Dorsolateral prefrontal cortex (tissue), 120 donors: ENCODE measurements at regions of chr5 and their contacts with region 1.

Region 1: DNA sequence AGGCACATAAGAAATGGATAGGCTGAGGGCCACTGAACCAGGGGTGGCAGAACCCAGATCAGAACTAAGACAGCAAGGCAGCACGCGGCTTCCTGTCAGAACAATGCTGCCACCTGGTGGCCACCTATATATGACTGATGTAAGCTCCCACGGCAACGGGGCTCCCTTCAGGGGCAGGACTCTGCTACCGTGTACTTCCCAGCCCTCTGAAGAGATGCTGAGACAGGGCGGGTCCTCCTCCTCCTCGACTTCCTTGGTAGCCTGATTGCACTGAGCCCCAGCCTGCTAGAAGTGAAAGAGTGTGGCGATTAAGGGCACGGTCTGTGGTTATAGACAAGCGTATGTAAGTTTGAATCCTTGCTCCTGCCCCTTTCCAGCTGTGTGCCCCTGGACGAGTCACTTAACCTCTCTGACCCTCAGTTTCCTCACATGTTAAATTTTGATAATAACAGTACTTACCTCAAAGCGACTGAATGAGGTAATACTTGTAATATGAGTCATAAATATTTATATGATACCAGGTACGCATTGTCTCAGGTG is 13.3 kb downstream of the RPS14 start:
- DNase-seq: peak; percentile 86 to 98 (median 90)
- H3K4me3 ChIP-seq: peak overlapping the region in 10 of 59 donors; percentile 7 to 40 (median 21)
- H3K27ac ChIP-seq: peak overlapping the region in 27 of 59 donors; percentile 5 to 70 (median 46)
- H3K27me3 ChIP-seq: no peaks in the 10 kb centered on the region
- CTCF ChIP-seq: peak; percentile 84 to 99 (median 95)

Region 2: GRCh38 chr5:150272526-150272925 is 163.7 kb before region 1 on chr5:
- intact Hi-C with region 1: loop called in 1 of 2 experiments (anchors 5 kb)
- DNase-seq: peak in 2 of 10 donors; percentile 60
- H3K4me3 ChIP-seq: no peak overlapping the region
- H3K27ac ChIP-seq: peak overlapping the region in 30 of 59 donors; percentile 3 to 85 (median 50)
- H3K27me3 ChIP-seq: no peaks in the 10 kb centered on the region
- CTCF ChIP-seq: peak in 54 of 56 donors; percentile 37 to 78 (median 56)

Region 3: GRCh38 chr5:150350524-150351344 is 85.5 kb before region 1 on chr5:
- intact Hi-C with region 1: loop called in 1 of 2 experiments (anchors 5 kb)
- DNase-seq: peak; percentile 26 to 87 (median 78)
- H3K4me3 ChIP-seq: no peak overlapping the region
- H3K27ac ChIP-seq: peak overlapping the region in 57 of 59 donors; percentile 5 to 87 (median 62)
- H3K27me3 ChIP-seq: no peaks in the 10 kb centered on the region
- CTCF ChIP-seq: peak; percentile 41 to 95 (median 84)

Region 4: DNA sequence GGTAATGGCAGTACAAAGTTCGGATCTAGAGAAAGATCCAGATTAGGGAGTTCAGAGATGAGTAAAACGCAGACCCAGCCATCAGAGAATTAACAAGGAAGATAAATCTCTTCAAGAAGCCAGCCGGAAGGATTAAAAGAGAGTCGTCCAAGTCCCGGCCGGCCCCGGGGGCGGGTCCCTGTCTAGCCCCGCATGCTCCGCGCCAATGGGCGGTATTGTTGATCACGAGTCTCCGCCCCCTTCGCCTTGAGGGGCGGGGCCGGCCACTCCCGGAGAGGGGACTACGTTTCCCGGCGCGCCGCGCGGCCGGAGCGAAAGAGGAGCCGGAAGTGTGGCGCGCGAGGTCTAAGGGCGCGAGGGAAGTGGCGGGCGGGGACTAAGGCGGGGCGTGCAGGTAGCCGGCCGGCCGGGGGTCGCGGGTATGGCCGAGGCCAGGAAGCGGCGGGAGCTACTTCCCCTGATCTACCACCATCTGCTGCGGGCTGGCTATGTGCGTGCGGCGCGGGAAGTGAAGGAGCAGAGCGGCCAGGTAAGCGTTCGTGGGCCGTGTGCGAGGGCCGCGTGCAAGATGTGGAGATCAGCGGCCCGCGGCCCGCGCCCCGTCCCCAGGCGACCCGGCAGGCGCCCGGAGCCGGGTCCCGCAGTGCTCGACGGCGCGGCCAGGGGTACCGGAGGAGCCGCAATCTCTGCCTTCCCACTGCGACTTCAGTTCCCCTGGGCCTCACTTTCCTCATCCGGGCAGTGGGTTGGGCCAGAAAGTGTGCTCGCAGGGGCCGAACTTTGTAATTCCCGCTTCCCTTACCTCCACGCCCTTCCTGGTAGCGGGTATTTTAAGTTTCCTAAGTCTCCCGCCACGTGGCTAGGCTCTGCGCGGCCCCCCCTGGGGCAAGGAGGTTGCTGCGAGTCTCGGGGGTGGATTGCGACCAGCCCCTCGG is 78.6 kb before region 1 on chr5 and contains the start of gene TCOF1:
- intact Hi-C with region 1: loop called (anchors 2 to 5 kb)
- DNase-seq: peak; percentile 96 to 99 (median 97)
- H3K4me3 ChIP-seq: peak within 1 kb of the TSS; percentile 74 to 99 (median 93)
- H3K27ac ChIP-seq: peak within 1 kb of the TSS in 52 of 59 donors; percentile 6 to 86 (median 66)
- H3K27me3 ChIP-seq: no peaks in the 10 kb centered on the region
- CTCF ChIP-seq: peak in 33 of 56 donors; percentile 10 to 63 (median 26)
- total RNA-seq, gene TCOF1: 26.4 to 51.1 (median 35.9) TPM

Region 5: GRCh38 chr5:150398722-150399523 is 37.3 kb before region 1 on chr5:
- intact Hi-C with region 1: loop called (anchors 2 to 5 kb)
- DNase-seq: no peak
- H3K4me3 ChIP-seq: no peak overlapping the region
- H3K27ac ChIP-seq: peak overlapping the region in 23 of 59 donors; percentile 1 to 89 (median 31)
- H3K27me3 ChIP-seq: no peaks in the 10 kb centered on the region
- CTCF ChIP-seq: peak in 12 of 56 donors; percentile 6 to 51 (median 24)